CD8-positive, alpha-beta T cell (primary cell): ENCODE measurements at regions of chr7 and their contacts with region 1.

Region 1: DNA sequence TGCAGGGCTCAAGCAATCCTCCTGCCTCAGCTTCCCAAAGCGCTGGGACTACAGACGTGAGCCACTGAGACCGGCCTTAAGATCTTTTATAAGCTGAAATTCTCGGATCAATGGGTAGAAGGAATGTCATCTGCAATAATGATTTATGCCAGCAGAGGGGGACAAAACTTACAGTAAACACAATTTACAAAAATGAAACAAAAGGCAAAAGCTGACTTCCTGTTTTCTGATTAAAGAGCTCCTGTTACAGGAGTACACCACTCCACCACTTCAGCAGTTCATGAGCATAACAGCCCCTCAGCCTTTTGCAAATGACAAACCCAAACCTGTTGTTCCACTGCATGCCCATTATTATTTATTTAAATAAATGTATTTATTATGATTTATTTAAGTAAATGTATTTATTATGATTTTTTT is 88.5 kb upstream of the ATP6V0A4 start:
- DNase-seq: peak in 6 of 9 experiments; percentile 15 to 84 (median 50)
- ATAC-seq: peak; percentile 93
- H3K4me3 ChIP-seq: no peak overlapping the region
- H3K4me3 Mint-ChIP-seq: peak overlapping the region; percentile 20
- H3K27ac ChIP-seq: peak overlapping the region in 1 of 2 experiments; percentile 5
- H3K27ac Mint-ChIP-seq: peak overlapping the region; percentile 78
- H3K4me1 ChIP-seq: peaks cover 3% of the 10 kb centered on the region
- H3K4me1 Mint-ChIP-seq: peaks cover 12% of the 10 kb centered on the region
- H3K27me3 ChIP-seq: no peaks in the 10 kb centered on the region
- H3K27me3 Mint-ChIP-seq: no peaks in the 10 kb centered on the region
- CTCF ChIP-seq: peak; percentile 72

Region 2: GRCh38 chr7:138837627-138838026 is 48.9 kb before region 1 on chr7:
- CTCF ChIA-PET with region 1: no interaction called
- POLR2A ChIA-PET with region 1: no interaction called
- intact Hi-C with region 1: no loop called
- DNase-seq: no peak
- ATAC-seq: no peak
- H3K4me3 ChIP-seq: no peak overlapping the region
- H3K4me3 Mint-ChIP-seq: no peak overlapping the region
- H3K27ac ChIP-seq: no peak overlapping the region
- H3K27ac Mint-ChIP-seq: no peak overlapping the region
- H3K4me1 ChIP-seq: no peaks in the 10 kb centered on the region
- H3K4me1 Mint-ChIP-seq: no peaks in the 10 kb centered on the region
- H3K27me3 ChIP-seq: no peaks in the 10 kb centered on the region
- H3K27me3 Mint-ChIP-seq: peaks cover 10% of the 10 kb centered on the region
- CTCF ChIP-seq: no peak

Region 3: GRCh38 chr7:138898255-138898654 is 11.7 kb after region 1 on chr7:
- CTCF ChIA-PET with region 1: interaction called, 42 read pairs
- POLR2A ChIA-PET with region 1: interaction called, 10 read pairs
- intact Hi-C with region 1: loop called (anchors 1 to 2 kb)
- DNase-seq: peak in 6 of 9 experiments; percentile 10 to 52 (median 36)
- ATAC-seq: peak; percentile 73
- H3K4me3 ChIP-seq: no peak overlapping the region
- H3K4me3 Mint-ChIP-seq: no peak overlapping the region
- H3K27ac ChIP-seq: no peak overlapping the region
- H3K27ac Mint-ChIP-seq: no peak overlapping the region
- H3K4me1 ChIP-seq: peaks cover 26% of the 10 kb centered on the region
- H3K4me1 Mint-ChIP-seq: peaks cover 42% of the 10 kb centered on the region
- H3K27me3 ChIP-seq: peaks cover 0 to 2% of the 10 kb centered on the region in 2 experiments
- H3K27me3 Mint-ChIP-seq: peaks cover 32% of the 10 kb centered on the region
- CTCF ChIP-seq: no peak

Region 4: GRCh38 chr7:138961159-138961558 is 74.7 kb after region 1 on chr7:
- CTCF ChIA-PET with region 1: no interaction called
- POLR2A ChIA-PET with region 1: no interaction called
- intact Hi-C with region 1: no loop called
- DNase-seq: no peak
- ATAC-seq: no peak
- H3K4me3 ChIP-seq: no peak overlapping the region
- H3K4me3 Mint-ChIP-seq: no peak overlapping the region
- H3K27ac ChIP-seq: no peak overlapping the region
- H3K27ac Mint-ChIP-seq: no peak overlapping the region
- H3K4me1 ChIP-seq: no peaks in the 10 kb centered on the region
- H3K4me1 Mint-ChIP-seq: no peaks in the 10 kb centered on the region
- H3K27me3 ChIP-seq: no peaks in the 10 kb centered on the region
- H3K27me3 Mint-ChIP-seq: peaks cover 8% of the 10 kb centered on the region
- CTCF ChIP-seq: no peak

Region 5: GRCh38 chr7:138981332-138982203 is 95.1 kb after region 1 on chr7 and contains the start of gene KIAA1549:
- CTCF ChIA-PET with region 1: interaction called, 19 read pairs
- POLR2A ChIA-PET with region 1: interaction called, 3 read pairs
- intact Hi-C with region 1: loop called (anchors 1 to 2 kb)
- DNase-seq: peak in 8 of 9 experiments; percentile 24 to 72 (median 48)
- ATAC-seq: peak; percentile 66
- H3K4me3 ChIP-seq: peak within 1 kb of the TSS; percentile 42 to 48
- H3K4me3 Mint-ChIP-seq: peak within 1 kb of the TSS; percentile 89
- H3K27ac ChIP-seq: no peak within 1 kb of the TSS
- H3K27ac Mint-ChIP-seq: no peak within 1 kb of the TSS
- H3K4me1 ChIP-seq: peaks cover 9% of the 10 kb centered on the region
- H3K4me1 Mint-ChIP-seq: peaks cover 12% of the 10 kb centered on the region
- H3K27me3 ChIP-seq: peaks cover 10 to 13% of the 10 kb centered on the region in 2 experiments
- H3K27me3 Mint-ChIP-seq: peaks cover 33% of the 10 kb centered on the region
- CTCF ChIP-seq: no peak
- total RNA-seq, gene KIAA1549: 0.06 TPM in 1 of 2 experiments, not detected in the other

Region 6: DNA sequence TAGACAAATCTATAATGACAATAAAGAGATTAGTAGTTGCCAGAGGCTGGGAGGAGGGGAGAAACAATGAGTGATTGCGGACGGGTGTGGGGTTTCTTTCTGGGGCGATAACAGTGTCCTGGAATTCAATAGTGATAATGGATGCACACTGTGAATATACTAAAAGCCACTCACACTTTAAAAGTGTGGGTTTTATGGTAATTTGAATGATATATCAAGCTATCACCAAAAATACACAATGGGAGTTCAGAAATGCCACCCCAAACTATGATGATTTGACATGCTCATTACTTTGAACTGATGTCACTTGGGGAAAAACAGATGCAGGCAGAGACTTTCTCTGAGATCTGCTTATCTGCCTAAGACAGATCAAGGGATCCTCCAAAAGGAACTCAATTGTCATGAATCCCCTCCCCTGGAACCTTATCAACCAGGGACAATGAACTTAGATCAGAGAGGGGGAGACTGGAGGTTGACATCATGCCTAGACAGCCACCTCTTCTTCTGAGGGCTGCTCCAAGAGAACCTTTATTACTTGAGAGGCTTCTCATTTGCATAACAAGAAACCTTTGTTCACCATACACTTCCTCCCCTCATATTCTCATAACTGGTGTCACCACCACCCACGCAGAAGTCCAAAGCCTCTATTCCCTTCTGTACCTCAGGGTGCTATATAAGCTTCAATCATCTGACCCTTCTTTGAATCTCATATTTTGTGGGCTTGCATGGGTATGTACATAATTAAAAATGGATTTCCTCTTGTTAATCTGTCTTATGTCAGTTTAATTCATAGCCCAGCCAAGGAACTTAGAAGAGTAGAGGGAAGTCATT is 237.8 kb after region 1 on chr7:
- CTCF ChIA-PET with region 1: interaction called, 34 read pairs
- POLR2A ChIA-PET with region 1: interaction called, 7 read pairs
- intact Hi-C with region 1: loop called (anchors 1 to 5 kb)
- DNase-seq: no peak
- ATAC-seq: no peak
- H3K4me3 ChIP-seq: no peak overlapping the region
- H3K4me3 Mint-ChIP-seq: no peak overlapping the region
- H3K27ac ChIP-seq: no peak overlapping the region
- H3K27ac Mint-ChIP-seq: no peak overlapping the region
- H3K4me1 ChIP-seq: peaks cover 7% of the 10 kb centered on the region
- H3K4me1 Mint-ChIP-seq: peaks cover 18% of the 10 kb centered on the region
- H3K27me3 ChIP-seq: no peaks in the 10 kb centered on the region
- H3K27me3 Mint-ChIP-seq: no peaks in the 10 kb centered on the region
- CTCF ChIP-seq: no peak